ENCODE measurements at regions of chr12 and their contacts with region 1.

Region 1: DNA sequence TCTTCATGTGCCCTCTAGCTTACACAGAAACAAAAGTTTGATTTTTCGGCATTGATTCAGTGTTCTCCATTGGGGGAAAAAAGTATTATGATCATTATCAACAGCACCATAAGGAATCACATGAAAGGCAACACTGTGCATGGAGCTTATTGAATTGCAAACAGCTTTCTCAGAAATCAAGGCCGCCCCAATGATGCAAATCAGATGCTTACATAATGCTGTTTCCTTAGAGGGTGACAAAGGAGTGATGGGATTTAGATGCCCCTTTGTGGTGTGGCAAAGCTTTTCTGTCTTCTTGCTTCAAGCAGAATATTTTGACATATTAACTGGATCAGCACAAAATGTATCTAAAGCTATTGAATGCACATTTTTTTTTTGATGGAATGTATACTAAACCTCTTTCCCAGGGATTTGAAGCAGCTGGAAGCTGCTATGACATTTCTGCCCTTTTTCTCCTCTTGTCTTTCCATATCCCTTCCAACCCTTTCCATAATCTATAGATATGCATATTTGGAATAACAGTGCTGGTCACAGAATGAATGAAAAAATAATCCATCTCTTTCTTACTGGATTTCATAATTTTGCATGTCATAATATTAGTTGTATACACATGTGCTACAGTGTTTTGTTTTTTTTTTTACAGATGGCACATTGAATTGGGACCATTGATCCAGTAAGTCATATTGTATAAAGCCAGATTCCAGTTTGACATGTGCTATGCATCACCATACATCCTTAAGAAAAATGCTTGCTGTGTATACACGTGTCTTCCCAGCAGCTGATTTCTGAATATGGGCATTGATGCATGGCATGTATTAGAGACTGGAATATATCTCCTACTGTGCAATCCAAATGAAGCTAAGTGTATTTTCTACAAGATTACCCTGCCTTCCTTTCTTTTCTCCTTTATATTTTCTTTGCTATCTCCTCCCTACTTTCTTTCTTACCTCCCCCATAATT is 259.7 kb upstream of the DCN start:
- DNase-seq: no peak
- ATAC-seq: no peak
- H3K4me3 ChIP-seq: no peak overlapping the region
- H3K27ac ChIP-seq: no peak overlapping the region
- H3K4me1 ChIP-seq: no peaks in the 10 kb centered on the region
- H3K27me3 ChIP-seq: no peaks in the 10 kb centered on the region
- CTCF ChIP-seq: no peak

Region 2: GRCh38 chr12:91072931-91073330 is 369.3 kb before region 1 on chr12:
- CTCF ChIA-PET with region 1: no interaction called
- POLR2A ChIA-PET with region 1: no interaction called
- in situ Hi-C with region 1: no loop called
- intact Hi-C with region 1: no loop called
- DNase-seq: no peak
- ATAC-seq: no peak
- H3K4me3 ChIP-seq: no peak overlapping the region
- H3K27ac ChIP-seq: no peak overlapping the region
- H3K4me1 ChIP-seq: no peaks in the 10 kb centered on the region
- H3K27me3 ChIP-seq: no peaks in the 10 kb centered on the region
- CTCF ChIP-seq: no peak

Region 3: GRCh38 chr12:92445253-92446082 is 1003.2 kb after region 1 on chr12:
- CTCF ChIA-PET with region 1: no interaction called
- POLR2A ChIA-PET with region 1: no interaction called
- in situ Hi-C with region 1: no loop called
- intact Hi-C with region 1: loop called (anchors 2 kb)
- DNase-seq: no peak
- ATAC-seq: no peak
- H3K4me3 ChIP-seq: no peak overlapping the region
- H3K27ac ChIP-seq: no peak overlapping the region
- H3K4me1 ChIP-seq: no peaks in the 10 kb centered on the region
- H3K27me3 ChIP-seq: no peaks in the 10 kb centered on the region
- CTCF ChIP-seq: no peak

Measured in Panc1 (cell line).